Spleen (tissue), 13 donors: ENCODE measurements at regions of chr3 and their contacts with region 1.

Region 1: DNA sequence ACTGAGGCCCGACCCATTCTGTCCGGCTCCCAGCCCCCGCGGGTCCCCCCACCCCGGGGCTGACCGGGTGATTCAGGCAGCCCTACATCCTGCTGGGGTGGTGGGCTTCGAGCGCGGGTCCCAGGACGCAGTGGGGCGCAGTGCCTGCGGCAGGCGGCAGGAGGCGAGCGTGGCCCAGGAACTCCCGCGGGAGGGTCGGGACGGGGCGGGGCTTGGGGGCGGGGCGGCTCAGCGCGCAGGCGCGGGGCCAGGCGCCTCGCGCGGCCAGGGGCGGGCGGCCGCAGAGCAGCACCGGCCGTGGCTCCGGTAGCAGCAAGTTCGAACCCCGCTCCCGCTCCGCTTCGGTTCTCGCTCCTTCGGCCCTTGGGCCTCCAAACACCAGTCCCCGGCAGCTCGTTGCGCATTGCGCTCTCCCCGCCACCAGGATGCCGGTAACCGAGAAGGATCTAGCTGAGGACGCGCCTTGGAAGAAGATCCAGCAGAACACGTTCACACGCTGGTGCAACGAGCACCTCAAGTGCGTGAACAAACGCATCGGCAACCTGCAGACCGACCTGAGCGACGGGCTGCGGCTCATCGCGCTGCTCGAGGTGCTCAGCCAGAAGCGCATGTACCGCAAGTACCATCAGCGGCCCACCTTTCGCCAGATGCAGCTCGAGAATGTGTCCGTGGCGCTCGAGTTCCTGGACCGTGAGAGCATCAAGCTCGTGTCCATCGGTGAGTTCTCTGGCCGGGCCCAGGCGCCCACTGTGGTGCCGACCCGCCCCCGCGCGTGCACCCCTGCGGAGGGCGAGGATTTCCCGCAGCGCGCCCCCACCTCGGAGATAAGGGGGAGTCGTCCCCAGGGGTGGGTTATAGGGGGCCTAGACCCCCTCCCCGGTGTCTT is at the start of gene FLNB:
- DNase-seq: peak; percentile 92
- H3K4me3 ChIP-seq: peak within 1 kb of the TSS; percentile 73 to 96 (median 83)
- H3K27ac ChIP-seq: peak within 1 kb of the TSS; percentile 53 to 86 (median 78)
- H3K4me1 ChIP-seq: peaks cover 11 to 54% (median 36%) of the 10 kb centered on the region in 6 donors
- H3K27me3 ChIP-seq: no peaks in the 10 kb centered on the region
- CTCF ChIP-seq: peak; percentile 36 to 91 (median 82)
- POLR2A ChIP-seq: peak in 1 of 3 donors; percentile 40
- total RNA-seq, gene FLNB: 77.5 to 163 (median 111) TPM

Region 2: DNA sequence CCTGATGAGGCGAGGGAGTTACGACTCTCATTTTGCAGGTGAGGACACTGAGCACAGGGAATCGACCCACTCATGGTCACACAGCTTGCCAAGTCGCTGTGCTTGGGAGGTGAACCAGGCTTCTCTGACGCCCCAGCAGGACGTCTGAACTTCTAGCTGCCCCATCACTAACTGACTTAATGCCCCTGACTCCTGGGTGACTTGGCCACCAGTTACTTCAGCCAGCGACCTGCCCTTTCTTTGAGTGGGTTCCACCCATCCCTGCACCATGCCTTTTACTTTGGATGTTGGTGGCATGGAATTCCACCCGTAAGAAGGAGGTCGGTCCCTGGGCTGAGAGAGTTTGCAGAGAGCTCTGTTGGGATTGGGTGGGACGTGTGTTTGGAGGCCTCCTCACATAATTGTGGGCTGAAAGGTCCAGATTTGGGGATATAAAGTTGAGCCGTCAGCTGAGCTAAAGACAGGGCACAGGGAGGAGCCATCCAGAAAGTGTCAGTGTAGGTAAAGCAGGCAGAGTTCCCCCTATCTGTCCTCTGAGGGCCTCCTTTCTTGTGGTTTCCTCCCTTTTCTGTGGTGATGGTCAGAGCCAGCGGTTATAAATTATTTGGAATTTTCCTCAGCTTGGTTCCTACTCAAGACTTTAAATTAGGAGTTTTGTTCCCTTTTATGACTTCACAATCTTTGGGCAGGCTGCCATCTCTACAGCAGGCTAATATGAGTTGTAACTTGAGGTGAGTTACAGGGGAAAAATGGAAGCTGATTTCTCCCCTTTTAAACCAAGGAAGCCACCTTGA is 54.8 kb after region 1 on chr3:
- intact Hi-C with region 1: no loop called
- DNase-seq: no peak
- H3K4me3 ChIP-seq: no peak overlapping the region
- H3K27ac ChIP-seq: peak overlapping the region in 4 of 8 donors; percentile 16 to 54 (median 24)
- H3K4me1 ChIP-seq: peaks cover 0 to 49% (median 18%) of the 10 kb centered on the region in 6 donors
- H3K27me3 ChIP-seq: no peaks in the 10 kb centered on the region
- CTCF ChIP-seq: no peak
- POLR2A ChIP-seq: no peak

Region 3: DNA sequence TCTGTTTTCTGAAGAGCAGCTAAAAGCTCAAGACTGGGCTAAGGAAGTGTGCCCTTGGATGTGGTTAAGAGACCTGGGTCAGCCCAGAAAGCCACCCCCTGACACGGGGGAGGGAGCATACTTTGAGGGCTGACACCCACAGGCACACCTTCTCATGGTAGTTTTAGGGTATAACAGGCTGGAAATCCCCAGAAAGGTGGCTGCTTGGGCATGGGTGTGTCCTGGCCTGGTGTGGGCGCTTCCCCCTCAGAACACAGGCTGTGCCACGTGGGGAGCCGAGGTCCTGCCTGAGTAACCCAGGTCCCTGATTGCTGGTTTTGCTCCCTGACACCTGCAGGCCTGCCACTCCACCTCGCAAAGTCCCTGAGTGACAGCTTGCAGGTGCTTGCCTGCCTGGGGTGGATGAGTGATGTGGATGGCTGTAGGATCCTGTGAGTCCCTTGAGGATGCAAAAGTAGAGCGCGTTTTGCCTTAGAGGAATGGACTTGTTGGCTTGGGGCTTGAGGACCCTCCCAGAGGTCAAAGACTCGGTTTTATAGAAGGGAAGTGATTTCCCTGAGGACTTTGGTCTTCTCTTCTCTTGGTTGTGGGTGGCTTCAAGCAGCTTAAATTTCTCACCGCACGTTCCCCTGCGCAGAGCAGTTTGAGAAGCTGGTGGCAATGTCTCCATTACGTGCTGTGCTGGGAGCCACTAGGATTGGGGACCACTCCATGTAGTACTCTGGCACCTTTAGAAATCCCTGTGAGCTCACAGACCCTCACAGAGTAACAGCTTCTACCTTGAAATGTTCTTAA is 108.0 kb after region 1 on chr3:
- intact Hi-C with region 1: no loop called
- DNase-seq: peak; percentile 91
- H3K4me3 ChIP-seq: no peak overlapping the region
- H3K27ac ChIP-seq: peak overlapping the region; percentile 15 to 81 (median 50)
- H3K4me1 ChIP-seq: peaks cover 38 to 69% (median 61%) of the 10 kb centered on the region in 6 donors
- H3K27me3 ChIP-seq: no peaks in the 10 kb centered on the region
- CTCF ChIP-seq: no peak
- POLR2A ChIP-seq: no peak

Region 4: DNA sequence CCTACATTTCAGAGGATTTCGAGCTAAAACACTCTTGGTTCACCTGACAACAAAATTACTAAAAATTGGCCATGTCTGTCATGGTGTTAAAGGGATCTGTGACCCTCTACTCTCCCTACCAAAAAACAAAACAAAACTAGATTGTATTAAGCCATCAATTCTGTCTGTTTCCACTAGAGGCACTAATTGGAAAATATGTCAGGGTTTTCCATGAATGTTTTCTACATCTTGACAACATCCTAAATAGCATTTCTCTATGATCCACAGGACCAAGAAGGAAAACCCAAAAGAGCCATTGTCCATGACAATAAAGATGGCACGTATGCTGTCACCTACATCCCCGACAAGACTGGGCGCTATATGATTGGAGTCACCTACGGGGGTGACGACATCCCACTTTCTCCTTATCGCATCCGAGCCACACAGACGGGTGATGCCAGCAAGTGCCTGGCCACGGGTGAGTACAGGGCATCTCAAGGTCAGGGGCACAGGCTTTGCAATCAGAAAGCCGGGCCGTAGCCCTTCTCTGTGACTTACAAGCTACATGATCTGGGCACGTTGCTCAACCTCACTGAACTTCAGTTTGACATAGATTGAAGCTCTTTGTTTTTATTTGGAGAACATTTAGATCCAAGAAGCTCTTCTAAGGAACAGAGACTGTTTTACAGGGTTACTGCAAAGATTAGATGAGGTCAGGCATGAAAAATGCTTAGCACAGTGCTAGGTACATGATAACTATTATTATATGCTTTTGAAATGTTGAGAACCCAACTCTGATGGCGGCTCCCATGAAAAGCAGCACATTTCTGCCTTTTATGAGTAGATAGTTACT is 127.5 kb after region 1 on chr3:
- intact Hi-C with region 1: no loop called
- DNase-seq: peak; percentile 34
- H3K4me3 ChIP-seq: no peak overlapping the region
- H3K27ac ChIP-seq: no peak overlapping the region
- H3K4me1 ChIP-seq: no peaks in the 10 kb centered on the region
- H3K27me3 ChIP-seq: no peaks in the 10 kb centered on the region
- CTCF ChIP-seq: no peak
- POLR2A ChIP-seq: no peak

Region 5: DNA sequence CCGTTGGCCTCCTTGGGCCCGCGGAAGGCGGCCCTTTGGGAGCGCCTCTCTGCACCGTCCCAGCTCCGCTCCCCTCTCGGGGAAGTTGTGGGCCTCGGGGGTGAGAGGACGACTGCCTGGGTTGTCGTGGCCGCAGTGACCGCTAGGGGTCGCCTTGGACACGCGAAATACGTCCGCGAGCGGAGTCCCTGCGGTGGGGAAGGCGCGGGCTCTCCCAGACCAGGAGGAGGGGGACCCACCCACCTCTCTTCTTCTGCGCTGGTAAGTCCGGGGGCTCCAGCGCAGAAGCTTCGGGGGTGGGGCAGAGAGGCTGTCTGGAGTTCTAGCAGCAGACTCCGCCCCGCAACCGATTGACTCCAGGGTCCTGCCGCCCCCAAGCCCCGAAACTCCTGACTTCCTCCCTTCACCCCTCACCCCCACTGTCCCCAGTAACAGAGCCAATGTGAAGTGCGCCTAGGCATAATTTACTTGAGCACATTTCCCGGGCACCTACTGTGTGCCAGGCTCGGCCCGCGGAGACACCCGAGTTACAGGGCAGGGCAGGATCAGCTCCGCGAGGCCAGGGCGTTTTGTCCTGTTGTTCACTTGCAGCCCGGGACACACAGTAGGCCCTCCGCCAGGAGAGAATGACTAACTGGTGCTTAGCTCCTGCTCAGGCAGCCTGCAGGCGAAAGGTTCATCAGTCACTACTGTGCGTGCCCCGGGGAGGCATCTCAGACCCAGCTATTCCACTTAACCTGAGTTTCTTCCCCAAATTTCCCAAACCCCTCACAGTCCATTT is 169.6 kb after region 1 on chr3:
- intact Hi-C with region 1: loop called (anchors 5 kb)
- DNase-seq: peak; percentile 98
- H3K4me3 ChIP-seq: peak overlapping the region; percentile 27 to 73 (median 38)
- H3K27ac ChIP-seq: peak overlapping the region in 1 of 8 donors; percentile 7
- H3K4me1 ChIP-seq: peaks cover 8 to 59% (median 49%) of the 10 kb centered on the region in 6 donors
- H3K27me3 ChIP-seq: peaks cover 0 to 15% (median 0%) of the 10 kb centered on the region in 7 donors
- CTCF ChIP-seq: peak; percentile 86 to 98 (median 96)
- POLR2A ChIP-seq: no peak

Region 6: DNA sequence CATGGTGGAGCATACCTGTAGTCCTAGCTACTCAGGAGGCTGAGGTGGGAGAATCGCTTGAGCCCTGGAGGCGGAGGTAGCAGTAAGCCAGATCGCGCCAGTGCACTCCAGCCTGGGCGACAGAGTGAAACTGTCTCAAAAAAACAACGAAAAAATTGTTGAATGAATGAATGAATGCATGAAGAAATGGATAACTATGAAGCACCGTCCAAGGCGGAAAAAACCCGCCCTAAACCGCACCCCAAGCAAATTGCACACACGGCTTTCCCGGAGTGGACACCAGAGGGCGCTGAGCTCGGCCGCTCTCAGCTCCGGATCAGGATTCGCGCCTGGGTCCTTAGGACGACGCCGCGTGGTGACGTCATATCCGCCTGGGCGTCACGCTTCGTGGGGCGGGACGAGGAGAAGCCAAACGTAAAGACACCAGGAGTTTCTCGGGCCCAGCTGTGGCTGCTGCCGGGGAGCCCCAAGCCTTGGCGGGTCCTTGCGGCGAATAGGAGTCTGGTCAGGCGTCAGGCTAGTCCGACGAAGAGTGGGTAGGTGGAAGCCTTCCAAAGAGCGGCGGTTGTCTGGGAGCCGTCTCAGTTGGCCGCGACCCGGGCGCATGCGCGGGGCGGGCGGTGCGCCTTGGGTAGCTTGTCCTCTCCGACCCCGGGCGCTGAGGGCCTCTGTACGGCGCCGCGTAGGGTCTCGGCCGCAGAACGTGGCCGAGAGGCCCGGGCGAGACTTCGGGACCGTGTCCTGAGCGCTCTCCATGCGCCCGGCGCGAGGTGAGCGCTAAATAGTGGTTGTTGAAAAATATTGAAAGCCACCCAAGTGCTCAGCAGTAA is 297.7 kb after region 1 on chr3 and contains the starts of genes HTD2 and RPP14:
- intact Hi-C with region 1: loop called (anchors 10 kb)
- DNase-seq: peak; percentile 100
- H3K4me3 ChIP-seq: peak within 1 kb of the TSS; percentile 57 to 83 (median 72)
- H3K27ac ChIP-seq: peak within 1 kb of the TSS; percentile 96 to 99 (median 97)
- H3K4me1 ChIP-seq: peaks cover 26 to 40% (median 33%) of the 10 kb centered on the region in 6 donors
- H3K27me3 ChIP-seq: peaks cover 0 to 4% (median 0%) of the 10 kb centered on the region in 7 donors
- CTCF ChIP-seq: peak; percentile 96 to 99 (median 98)
- POLR2A ChIP-seq: peak in 1 of 3 donors; percentile 59
- total RNA-seq, gene HTD2: 6.4 to 20.0 (median 8.7) TPM
- total RNA-seq, gene RPP14: 13.3 to 21.3 (median 16.1) TPM